PC-9 (cell line): ENCODE measurements at regions of chr17 and their contacts with region 1.

Region 1: DNA sequence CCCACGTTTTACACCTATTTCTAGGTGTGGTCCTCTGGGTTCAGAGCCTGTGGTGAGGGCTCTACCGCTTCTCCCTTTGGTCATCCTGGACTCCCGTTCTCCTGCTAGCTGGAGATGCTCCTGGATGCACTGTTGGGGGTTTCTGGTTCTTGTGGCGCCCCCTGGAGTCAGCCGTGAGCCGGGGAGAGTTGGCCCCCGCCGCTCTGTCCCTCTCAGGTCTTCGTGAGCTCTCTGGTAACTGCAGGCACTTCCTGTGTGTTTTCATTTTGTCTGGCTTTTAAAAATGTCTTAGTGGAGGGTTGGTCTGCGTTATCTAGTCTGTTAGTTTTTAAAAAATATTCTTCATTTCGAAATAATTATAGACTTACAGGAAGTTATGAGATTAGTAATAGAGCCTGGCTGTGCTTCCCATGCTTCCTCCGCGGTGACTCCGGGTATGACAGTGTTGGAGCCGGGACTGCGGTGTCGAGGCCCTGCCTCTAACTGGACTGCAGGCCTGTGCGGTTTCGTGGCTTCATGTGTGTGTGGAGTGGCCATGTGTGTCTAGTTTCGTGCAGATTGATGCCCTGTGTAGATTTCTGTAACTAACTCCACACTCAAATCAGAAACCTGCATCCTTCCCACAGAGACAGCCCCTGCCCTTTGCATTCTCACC is 78.0 kb upstream of the ZNF750 start:
- DNase-seq: peak in 1 of 2 experiments; percentile 11
- H3K4me3 ChIP-seq: no peak overlapping the region
- H3K27ac ChIP-seq: no peak overlapping the region
- H3K4me1 ChIP-seq: no peaks in the 10 kb centered on the region
- H3K27me3 ChIP-seq: no peaks in the 10 kb centered on the region
- CTCF ChIP-seq: 0 out of 2 replicates have a peak, but pooled peaks have one; percentile 17

Region 2: GRCh38 chr17:82702231-82702927 is 215.4 kb before region 1 on chr17:
- CTCF ChIA-PET with region 1: no interaction called
- POLR2A ChIA-PET with region 1: no interaction called
- intact Hi-C with region 1: no loop called
- DNase-seq: no peak
- H3K4me3 ChIP-seq: no peak overlapping the region
- H3K27ac ChIP-seq: no peak overlapping the region
- H3K4me1 ChIP-seq: no peaks in the 10 kb centered on the region
- H3K27me3 ChIP-seq: no peaks in the 10 kb centered on the region
- CTCF ChIP-seq: no peak

Region 3: DNA sequence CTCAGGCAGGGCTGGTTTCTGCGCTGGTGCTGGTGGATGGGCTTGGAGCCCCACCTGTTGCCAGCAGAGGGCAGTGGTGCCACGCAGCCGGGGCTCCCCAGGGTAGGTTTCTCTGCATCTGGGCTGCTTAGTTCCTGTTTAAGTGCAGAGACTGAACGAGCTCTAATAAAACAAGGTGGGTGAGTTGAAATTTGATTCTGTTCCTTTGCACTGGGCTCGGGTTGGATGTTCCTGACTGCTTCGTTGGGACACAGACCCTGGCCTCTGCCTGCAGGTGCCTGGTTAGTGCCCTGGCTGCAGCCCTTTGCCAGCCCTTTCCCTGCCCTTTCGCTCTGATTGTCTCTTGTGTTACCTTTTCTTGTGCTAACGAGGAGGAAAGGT is 135.9 kb before region 1 on chr17:
- CTCF ChIA-PET with region 1: interaction called, 4 read pairs
- POLR2A ChIA-PET with region 1: no interaction called
- intact Hi-C with region 1: loop called (anchors 5 kb)
- DNase-seq: peak; percentile 61 to 85
- H3K4me3 ChIP-seq: no peak overlapping the region
- H3K27ac ChIP-seq: no peak overlapping the region
- H3K4me1 ChIP-seq: peaks cover 4% of the 10 kb centered on the region; the same call in 1 of the 2 replicates
- H3K27me3 ChIP-seq: no peaks in the 10 kb centered on the region
- CTCF ChIP-seq: peak; percentile 88

Region 4: DNA sequence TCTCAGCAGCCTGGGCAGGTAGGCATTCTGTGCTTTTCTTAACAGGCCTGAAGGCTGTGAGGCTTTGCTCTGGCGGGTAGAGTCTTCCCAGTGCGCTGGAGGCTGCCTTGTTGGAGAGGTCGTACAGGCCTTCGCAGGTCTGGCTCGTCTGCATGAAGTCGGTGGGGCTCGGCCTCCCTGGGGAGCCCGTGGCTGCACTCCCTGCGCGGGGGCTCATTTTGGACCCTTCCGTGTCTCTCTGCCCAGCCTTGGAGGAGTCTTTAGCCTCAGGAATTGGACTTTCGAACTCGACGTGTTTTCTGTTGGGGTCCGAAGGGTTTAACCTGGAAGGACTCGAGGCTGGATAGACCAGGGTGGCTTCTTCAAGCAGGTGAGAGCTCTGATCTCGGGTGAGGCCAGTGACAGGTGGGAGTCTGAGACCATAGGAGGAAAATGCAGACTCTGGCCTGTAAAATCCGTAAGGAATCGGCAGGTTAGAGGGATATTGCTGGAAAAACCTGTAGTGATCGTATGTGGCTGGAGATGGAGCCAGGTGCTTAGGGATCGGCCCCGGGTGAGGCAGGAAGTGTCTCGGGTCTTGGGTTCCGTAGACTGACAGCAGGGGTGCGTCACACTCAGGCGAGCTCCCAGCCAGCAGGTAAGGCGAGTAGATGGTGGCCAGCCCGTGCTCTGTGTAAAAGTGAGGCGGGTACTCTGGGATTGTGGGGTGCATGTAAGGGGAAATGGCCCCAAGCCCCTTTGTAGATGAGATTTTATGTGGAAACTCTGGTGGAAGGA is 86.6 kb before region 1 on chr17:
- CTCF ChIA-PET with region 1: no interaction called
- POLR2A ChIA-PET with region 1: no interaction called
- intact Hi-C with region 1: no loop called
- DNase-seq: no peak
- H3K4me3 ChIP-seq: no peak overlapping the region
- H3K27ac ChIP-seq: no peak overlapping the region
- H3K4me1 ChIP-seq: no peaks in the 10 kb centered on the region
- H3K27me3 ChIP-seq: no peaks in the 10 kb centered on the region
- CTCF ChIP-seq: no peak

Region 5: GRCh38 chr17:82897514-82898249 is 20.1 kb before region 1 on chr17:
- CTCF ChIA-PET with region 1: interaction called, 20 read pairs
- POLR2A ChIA-PET with region 1: no interaction called
- intact Hi-C with region 1: no loop called
- DNase-seq: no peak
- H3K4me3 ChIP-seq: no peak overlapping the region
- H3K27ac ChIP-seq: no peak overlapping the region
- H3K4me1 ChIP-seq: no peaks in the 10 kb centered on the region
- H3K27me3 ChIP-seq: no peaks in the 10 kb centered on the region
- CTCF ChIP-seq: no peak

Region 6: GRCh38 chr17:83119987-83120864 is 202.4 kb after region 1 on chr17:
- CTCF ChIA-PET with region 1: no interaction called
- POLR2A ChIA-PET with region 1: no interaction called
- intact Hi-C with region 1: no loop called
- DNase-seq: no peak
- H3K4me3 ChIP-seq: no peak overlapping the region
- H3K27ac ChIP-seq: no peak overlapping the region
- H3K4me1 ChIP-seq: no peaks in the 10 kb centered on the region
- H3K27me3 ChIP-seq: no peaks in the 10 kb centered on the region
- CTCF ChIP-seq: no peak